Activated B cell treated with CpG ODN at 0.5 μM for 24 hours (primary cell): ENCODE measurements at regions of chr20 and their contacts with region 1.

Region 1: GRCh38 chr20:48828022-48828743 is 384 bp upstream of the PREX1 start:
- DNase-seq: peak; percentile 93
- ATAC-seq: peak; percentile 65
- H3K4me3 Mint-ChIP-seq: peak overlapping the region; percentile 88
- H3K27ac Mint-ChIP-seq: peak overlapping the region; percentile 85
- H3K4me1 Mint-ChIP-seq: peaks cover 42% of the 10 kb centered on the region
- H3K27me3 Mint-ChIP-seq: no peaks in the 10 kb centered on the region
- CTCF ChIP-seq: no peak

Region 2: DNA sequence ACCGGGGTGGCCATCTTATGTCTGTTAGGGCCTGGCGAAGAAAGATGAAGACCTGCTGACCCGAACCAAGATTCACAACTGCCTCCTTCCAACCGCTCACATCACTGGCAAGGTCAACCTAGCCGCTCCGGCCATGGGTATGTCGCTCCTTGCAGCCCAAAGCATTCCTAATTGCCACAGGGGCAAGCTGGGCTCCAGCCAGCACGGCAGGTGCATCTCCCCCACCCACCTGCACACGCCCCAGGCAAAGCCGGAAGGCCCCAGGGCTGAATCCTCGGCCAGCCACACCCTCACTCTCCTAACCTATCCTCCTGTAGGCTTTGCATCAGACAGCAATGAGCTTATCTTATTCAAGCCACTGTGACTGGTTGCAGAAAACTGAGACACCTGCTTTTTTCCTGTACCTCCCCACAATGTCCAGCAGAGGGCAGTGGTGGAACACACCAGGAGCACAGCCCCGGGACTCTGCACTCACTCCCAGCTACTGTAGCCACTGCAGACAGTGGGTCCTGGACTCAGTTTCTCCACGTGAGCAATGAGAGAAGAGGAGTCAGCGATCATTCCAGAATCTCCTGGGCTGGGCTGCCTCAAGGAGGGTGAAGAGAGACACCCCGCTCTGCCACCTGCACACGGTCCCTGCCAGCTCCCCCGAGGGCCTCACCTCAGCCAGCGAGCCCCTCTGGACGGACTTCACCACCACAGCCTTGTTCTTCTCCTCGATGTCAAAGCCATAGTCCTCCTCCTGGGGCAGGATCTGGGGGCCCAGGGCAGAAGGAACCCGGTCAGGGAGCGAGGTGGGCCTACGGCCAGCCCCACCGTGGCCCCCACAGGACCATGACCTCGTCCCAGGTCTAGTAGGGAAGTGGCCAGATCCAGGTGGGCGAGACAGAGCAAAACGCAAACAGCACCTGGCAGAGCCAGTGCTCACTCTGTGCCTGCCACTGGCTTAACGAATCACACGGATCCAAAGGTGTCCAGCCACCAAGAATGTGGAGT is 170.4 kb before region 1 on chr20:
- CTCF ChIA-PET with region 1: interaction called, 12 read pairs
- POLR2A ChIA-PET with region 1: interaction called, 5 read pairs
- intact Hi-C with region 1: loop called (anchors 2 kb)
- DNase-seq: peak; percentile 46
- ATAC-seq: peak; percentile 95
- H3K4me3 Mint-ChIP-seq: no peak overlapping the region
- H3K27ac Mint-ChIP-seq: no peak overlapping the region
- H3K4me1 Mint-ChIP-seq: peaks cover 5% of the 10 kb centered on the region
- H3K27me3 Mint-ChIP-seq: no peaks in the 10 kb centered on the region
- CTCF ChIP-seq: peak; percentile 78

Region 3: GRCh38 chr20:48722737-48723191 is 105.4 kb before region 1 on chr20:
- CTCF ChIA-PET with region 1: interaction called, 3 read pairs
- POLR2A ChIA-PET with region 1: interaction called, 8 read pairs
- intact Hi-C with region 1: loop called (anchors 2 kb)
- DNase-seq: no peak
- ATAC-seq: peak; percentile 52
- H3K4me3 Mint-ChIP-seq: peak overlapping the region; percentile 47
- H3K27ac Mint-ChIP-seq: peak overlapping the region; percentile 84
- H3K4me1 Mint-ChIP-seq: peaks cover 70% of the 10 kb centered on the region
- H3K27me3 Mint-ChIP-seq: no peaks in the 10 kb centered on the region
- CTCF ChIP-seq: no peak

Region 4: GRCh38 chr20:48787861-48788375 is 40.3 kb before region 1 on chr20:
- CTCF ChIA-PET with region 1: interaction called, 7 read pairs
- POLR2A ChIA-PET with region 1: interaction called, 41 read pairs
- intact Hi-C with region 1: loop called (anchors 1 kb)
- DNase-seq: peak; percentile 18
- ATAC-seq: peak; percentile 16
- H3K4me3 Mint-ChIP-seq: peak overlapping the region; percentile 21
- H3K27ac Mint-ChIP-seq: peak overlapping the region; percentile 88
- H3K4me1 Mint-ChIP-seq: no peaks in the 10 kb centered on the region
- H3K27me3 Mint-ChIP-seq: no peaks in the 10 kb centered on the region
- CTCF ChIP-seq: no peak

Region 5: GRCh38 chr20:48846498-48847485 is 18.6 kb after region 1 on chr20:
- CTCF ChIA-PET with region 1: interaction called, 10 read pairs
- POLR2A ChIA-PET with region 1: interaction called, 37 read pairs
- intact Hi-C with region 1: loop called (anchors 1 kb)
- DNase-seq: peak; percentile 61
- ATAC-seq: peak; percentile 97
- H3K4me3 Mint-ChIP-seq: peak overlapping the region; percentile 39
- H3K27ac Mint-ChIP-seq: peak overlapping the region; percentile 80
- H3K4me1 Mint-ChIP-seq: peaks cover 50% of the 10 kb centered on the region
- H3K27me3 Mint-ChIP-seq: no peaks in the 10 kb centered on the region
- CTCF ChIP-seq: no peak

Region 6: GRCh38 chr20:48875911-48876640 is 47.9 kb after region 1 on chr20:
- CTCF ChIA-PET with region 1: interaction called, 6 read pairs
- POLR2A ChIA-PET with region 1: interaction called, 6 read pairs
- intact Hi-C with region 1: loop called (anchors 2 kb)
- DNase-seq: peak; percentile 25
- ATAC-seq: peak; percentile 84
- H3K4me3 Mint-ChIP-seq: no peak overlapping the region
- H3K27ac Mint-ChIP-seq: peak overlapping the region; percentile 36
- H3K4me1 Mint-ChIP-seq: peaks cover 44% of the 10 kb centered on the region
- H3K27me3 Mint-ChIP-seq: no peaks in the 10 kb centered on the region
- CTCF ChIP-seq: no peak

Region 7: DNA sequence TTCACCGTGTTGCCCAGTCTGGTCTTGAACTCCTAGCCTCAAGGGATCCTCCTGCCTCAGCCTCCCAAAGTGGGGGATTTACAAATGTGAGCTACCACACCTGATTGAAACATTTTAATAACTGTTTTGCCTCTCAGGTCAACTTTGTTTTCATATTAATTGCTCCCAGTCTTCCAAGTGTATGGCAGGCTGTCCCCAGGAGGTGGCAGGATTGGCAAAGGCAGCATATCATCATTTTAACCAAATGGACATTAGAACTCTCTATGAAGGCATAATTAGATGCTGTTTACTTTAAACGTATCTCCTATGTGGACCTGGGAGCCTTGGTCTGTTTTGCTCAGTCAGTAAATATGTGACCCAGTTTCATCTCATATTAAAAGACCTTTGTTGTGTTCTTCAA is 158.7 kb after region 1 on chr20:
- CTCF ChIA-PET with region 1: no interaction called
- POLR2A ChIA-PET with region 1: no interaction called
- intact Hi-C with region 1: no loop called
- DNase-seq: no peak
- ATAC-seq: no peak
- H3K4me3 Mint-ChIP-seq: no peak overlapping the region
- H3K27ac Mint-ChIP-seq: peak overlapping the region; percentile 30
- H3K4me1 Mint-ChIP-seq: no peaks in the 10 kb centered on the region
- H3K27me3 Mint-ChIP-seq: no peaks in the 10 kb centered on the region
- CTCF ChIP-seq: no peak

Region 8: DNA sequence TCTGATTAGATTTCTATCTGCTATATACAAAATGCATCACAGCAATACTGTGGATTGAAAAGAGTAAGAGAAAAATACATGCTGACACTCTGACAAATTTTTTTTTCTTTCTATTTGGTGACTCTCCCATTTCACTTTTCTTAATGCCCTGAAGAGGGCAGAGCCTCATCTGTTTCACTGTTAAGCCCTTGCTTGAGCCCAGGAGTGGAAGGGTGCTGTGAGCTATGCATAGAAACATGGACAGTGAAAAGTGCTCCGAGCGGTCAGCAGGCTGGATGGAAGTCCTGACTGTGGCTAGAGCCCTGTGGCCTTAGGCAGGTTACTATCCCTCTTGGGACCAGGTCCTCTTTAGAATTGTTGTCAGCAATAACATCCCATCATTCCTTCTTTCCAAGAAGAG is 200.5 kb after region 1 on chr20:
- CTCF ChIA-PET with region 1: no interaction called
- POLR2A ChIA-PET with region 1: no interaction called
- intact Hi-C with region 1: no loop called
- DNase-seq: no peak
- ATAC-seq: no peak
- H3K4me3 Mint-ChIP-seq: no peak overlapping the region
- H3K27ac Mint-ChIP-seq: no peak overlapping the region
- H3K4me1 Mint-ChIP-seq: no peaks in the 10 kb centered on the region
- H3K27me3 Mint-ChIP-seq: no peaks in the 10 kb centered on the region
- CTCF ChIP-seq: no peak

Region 9: DNA sequence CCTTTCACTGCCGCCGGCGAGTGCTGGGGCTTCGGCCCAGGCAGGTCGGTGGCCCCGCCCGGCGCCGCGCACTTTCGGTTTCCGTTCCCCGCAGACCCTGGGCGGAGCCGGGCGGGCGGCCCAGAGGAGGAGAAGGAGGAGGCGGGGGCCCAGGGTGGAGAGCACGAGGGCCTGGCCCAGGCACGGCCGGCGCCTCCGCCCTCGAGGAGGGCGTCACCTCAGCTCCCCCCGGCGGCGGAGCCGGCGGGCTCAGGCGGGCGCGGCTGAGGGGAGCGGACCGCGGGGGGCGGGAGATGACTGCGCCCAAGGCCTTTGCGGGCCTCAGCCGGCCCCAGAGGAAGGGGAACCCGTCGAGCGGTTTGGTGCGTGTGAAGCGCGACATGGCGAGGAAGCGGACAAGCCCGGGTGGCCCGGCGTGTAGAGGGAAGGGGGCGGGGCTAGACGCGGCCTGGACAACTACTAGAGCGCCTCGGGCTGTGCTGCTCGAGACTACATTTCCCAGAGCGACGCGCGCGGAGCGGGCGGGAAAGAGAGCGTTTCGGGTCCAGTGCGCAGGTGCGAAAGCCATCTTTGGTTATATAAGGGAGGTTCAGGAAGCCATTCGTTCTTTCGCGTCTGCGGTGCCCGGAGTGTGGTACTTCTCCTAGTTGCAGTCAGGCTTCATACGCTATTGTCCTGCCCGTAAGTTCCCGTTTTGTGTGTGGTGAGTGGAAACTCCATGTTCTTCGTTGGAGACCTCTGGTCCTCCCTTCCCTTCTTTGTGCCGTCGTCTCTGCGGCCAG is 450.0 kb after region 1 on chr20 and contains the start of gene ZNFX1:
- CTCF ChIA-PET with region 1: no interaction called
- POLR2A ChIA-PET with region 1: no interaction called
- intact Hi-C with region 1: loop called (anchors 10 kb)
- DNase-seq: peak; percentile 96
- ATAC-seq: peak; percentile 81
- H3K4me3 Mint-ChIP-seq: peak within 1 kb of the TSS; percentile 98
- H3K27ac Mint-ChIP-seq: peak within 1 kb of the TSS; percentile 98
- H3K4me1 Mint-ChIP-seq: peaks cover 66% of the 10 kb centered on the region
- H3K27me3 Mint-ChIP-seq: no peaks in the 10 kb centered on the region
- CTCF ChIP-seq: no peak
- total RNA-seq, gene ZNFX1: 49.6 and 51.9 TPM in 2 replicates